ENCODE measurements at regions of chr6 and their contacts with region 1.

Region 1: GRCh38 chr6:111764238-111765175 is 108.7 kb downstream of the FYN start:
- DNase-seq: peak; percentile 94
- ATAC-seq: peak; percentile 83
- H3K4me3 ChIP-seq: peak overlapping the region; percentile 24; the same call in 1 of the 2 replicates
- H3K27ac ChIP-seq: peak overlapping the region; percentile 93
- H3K4me1 ChIP-seq: peaks cover 88% of the 10 kb centered on the region
- H3K27me3 ChIP-seq: no peaks in the 10 kb centered on the region
- CTCF ChIP-seq: no peak
- EP300 ChIP-seq: peak; percentile 74 to 89; a peak in 2 of 4 replicates
- POLR2A ChIP-seq: no peak; the same call in 1 of the 2 replicates
- RAD21 ChIP-seq: 0 out of 2 replicates have a peak, but pooled peaks have one; percentile 16

Region 2: GRCh38 chr6:111456208-111456607 is 308.3 kb before region 1 on chr6:
- CTCF ChIA-PET with region 1: no interaction called
- POLR2A ChIA-PET with region 1: no interaction called
- RAD21 ChIA-PET with region 1: no interaction called
- SMC1A ChIA-PET with region 1: no interaction called
- in situ Hi-C with region 1: no loop called
- intact Hi-C with region 1: no loop called
- DNase-seq: no peak
- ATAC-seq: no peak
- H3K4me3 ChIP-seq: no peak overlapping the region
- H3K27ac ChIP-seq: no peak overlapping the region
- H3K4me1 ChIP-seq: no peaks in the 10 kb centered on the region
- H3K27me3 ChIP-seq: no peaks in the 10 kb centered on the region
- CTCF ChIP-seq: no peak
- EP300 ChIP-seq: no peak
- POLR2A ChIP-seq: no peak
- RAD21 ChIP-seq: no peak

Region 3: GRCh38 chr6:111642463-111643158 is 121.9 kb before region 1 on chr6:
- CTCF ChIA-PET with region 1: no interaction called
- POLR2A ChIA-PET with region 1: no interaction called
- RAD21 ChIA-PET with region 1: no interaction called
- SMC1A ChIA-PET with region 1: no interaction called
- in situ Hi-C with region 1: no loop called
- intact Hi-C with region 1: no loop called
- DNase-seq: peak; percentile 21
- ATAC-seq: peak; percentile 95
- H3K4me3 ChIP-seq: no peak overlapping the region
- H3K27ac ChIP-seq: no peak overlapping the region
- H3K4me1 ChIP-seq: no peaks in the 10 kb centered on the region
- H3K27me3 ChIP-seq: no peaks in the 10 kb centered on the region
- CTCF ChIP-seq: peak; percentile 57 to 77 (median 65)
- EP300 ChIP-seq: no peak
- POLR2A ChIP-seq: no peak
- RAD21 ChIP-seq: peak; percentile 75

Region 4: GRCh38 chr6:111727802-111728201 is 36.7 kb before region 1 on chr6:
- CTCF ChIA-PET with region 1: interaction called, 13 read pairs
- POLR2A ChIA-PET with region 1: interaction called, 8 read pairs
- RAD21 ChIA-PET with region 1: interaction called, 75 read pairs
- SMC1A ChIA-PET with region 1: interaction called, 86 read pairs
- in situ Hi-C with region 1: no loop called
- intact Hi-C with region 1: loop called (anchors 1 kb)
- DNase-seq: no peak
- ATAC-seq: no peak
- H3K4me3 ChIP-seq: no peak overlapping the region
- H3K27ac ChIP-seq: no peak overlapping the region
- H3K4me1 ChIP-seq: peaks cover 48% of the 10 kb centered on the region
- H3K27me3 ChIP-seq: no peaks in the 10 kb centered on the region
- CTCF ChIP-seq: peak in 2 of 3 experiments; percentile 11 to 38; a peak in 1 of 6 replicates
- EP300 ChIP-seq: no peak
- POLR2A ChIP-seq: no peak
- RAD21 ChIP-seq: no peak

Region 5: DNA sequence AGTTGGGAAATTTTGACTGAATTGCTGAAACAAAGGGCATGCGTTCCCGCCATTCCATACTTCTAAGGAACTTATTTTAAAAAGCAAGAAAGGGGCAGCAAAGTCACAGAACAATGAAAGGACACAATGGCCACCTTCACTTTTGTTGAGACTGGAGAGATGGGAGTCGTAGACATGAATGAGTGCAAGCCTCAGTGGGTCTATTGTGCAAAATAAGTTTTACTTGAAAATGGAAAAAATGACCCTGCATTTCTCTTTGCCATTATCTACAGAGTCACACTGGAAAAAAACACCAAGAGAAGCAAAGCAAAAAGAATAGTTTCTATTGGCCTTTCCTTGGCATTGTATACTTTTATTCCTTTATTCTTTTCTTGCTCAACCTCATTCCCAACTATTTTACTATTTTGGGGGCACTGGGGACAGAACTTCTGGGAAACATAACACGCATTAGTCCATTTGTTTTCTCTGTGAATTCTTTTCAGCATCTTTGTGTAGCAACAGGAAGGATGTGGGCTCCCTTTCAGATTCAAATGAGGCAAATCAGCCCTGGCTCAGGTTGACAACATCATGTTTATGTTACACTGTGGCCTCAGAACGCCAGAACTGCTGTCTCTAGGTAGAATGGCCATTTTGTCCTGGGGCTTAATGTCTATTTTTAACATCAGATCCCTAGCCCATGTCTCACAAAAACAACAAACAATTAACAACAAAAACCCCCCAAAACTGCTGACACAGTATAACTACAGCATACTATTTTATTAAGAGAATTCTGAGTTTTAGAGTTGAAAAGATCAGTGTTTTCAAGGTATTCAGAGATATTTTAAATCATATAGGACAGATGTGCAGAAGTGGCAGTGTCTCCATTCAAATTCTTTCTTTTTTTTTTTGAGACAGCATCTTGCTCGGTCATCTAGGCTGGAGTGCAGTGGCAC is 13.5 kb before region 1 on chr6:
- CTCF ChIA-PET with region 1: interaction called, 62 read pairs
- POLR2A ChIA-PET with region 1: interaction called, 56 read pairs
- RAD21 ChIA-PET with region 1: interaction called, 158 read pairs
- SMC1A ChIA-PET with region 1: interaction called, 156 read pairs
- in situ Hi-C with region 1: no loop called
- intact Hi-C with region 1: loop called (anchors 1 kb)
- DNase-seq: no peak
- ATAC-seq: peak; percentile 83
- H3K4me3 ChIP-seq: no peak overlapping the region
- H3K27ac ChIP-seq: peak overlapping the region; percentile 85
- H3K4me1 ChIP-seq: peaks cover 69% of the 10 kb centered on the region
- H3K27me3 ChIP-seq: no peaks in the 10 kb centered on the region
- CTCF ChIP-seq: no peak
- EP300 ChIP-seq: peak; percentile 27 to 70; a peak in 2 of 4 replicates
- POLR2A ChIP-seq: no peak
- RAD21 ChIP-seq: peak; percentile 19; the same call in 1 of the 2 replicates

Region 6: GRCh38 chr6:111804627-111805235 is 40.2 kb after region 1 on chr6:
- CTCF ChIA-PET with region 1: interaction called, 22 read pairs
- POLR2A ChIA-PET with region 1: interaction called, 7 read pairs
- RAD21 ChIA-PET with region 1: interaction called, 56 read pairs
- SMC1A ChIA-PET with region 1: interaction called, 66 read pairs
- in situ Hi-C with region 1: no loop called
- intact Hi-C with region 1: loop called (anchors 1 kb)
- DNase-seq: peak; percentile 84
- ATAC-seq: peak; percentile 77
- H3K4me3 ChIP-seq: no peak overlapping the region
- H3K27ac ChIP-seq: peak overlapping the region; percentile 70
- H3K4me1 ChIP-seq: peaks cover 70% of the 10 kb centered on the region
- H3K27me3 ChIP-seq: no peaks in the 10 kb centered on the region
- CTCF ChIP-seq: peak in 2 of 3 experiments; percentile 24 to 35; a peak in 2 of 6 replicates
- EP300 ChIP-seq: peak; percentile 65 to 88; a peak in 2 of 4 replicates
- POLR2A ChIP-seq: no peak
- RAD21 ChIP-seq: peak; percentile 62

Region 7: DNA sequence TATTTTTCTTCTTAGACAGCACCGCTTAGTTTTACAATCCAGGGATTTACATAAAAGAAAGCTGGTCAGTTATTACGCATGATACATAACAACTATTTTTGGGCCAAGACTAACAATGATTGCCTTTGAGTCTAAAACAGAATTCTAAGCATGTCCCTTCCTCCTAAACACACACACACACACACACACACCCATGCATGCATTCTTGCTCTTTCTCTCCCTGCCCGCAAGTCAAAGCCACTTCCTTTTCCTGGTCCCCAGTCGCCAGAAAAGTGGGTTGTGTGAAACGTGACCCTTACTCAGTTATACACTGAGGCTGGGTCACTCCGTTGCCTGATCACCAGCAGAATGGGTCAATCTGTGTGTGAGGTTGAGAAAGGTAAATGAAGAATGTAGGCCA is 77.3 kb after region 1 on chr6:
- CTCF ChIA-PET with region 1: interaction called, 25 read pairs
- POLR2A ChIA-PET with region 1: interaction called, 19 read pairs
- RAD21 ChIA-PET with region 1: interaction called, 35 read pairs
- SMC1A ChIA-PET with region 1: interaction called, 55 read pairs
- in situ Hi-C with region 1: no loop called
- intact Hi-C with region 1: no loop called
- DNase-seq: peak; percentile 60
- ATAC-seq: no peak
- H3K4me3 ChIP-seq: no peak overlapping the region; the same call in 1 of the 2 replicates
- H3K27ac ChIP-seq: peak overlapping the region; percentile 72
- H3K4me1 ChIP-seq: peaks cover 82% of the 10 kb centered on the region
- H3K27me3 ChIP-seq: no peaks in the 10 kb centered on the region
- CTCF ChIP-seq: no peak
- EP300 ChIP-seq: peak; percentile 36 to 52; a peak in 2 of 4 replicates
- POLR2A ChIP-seq: no peak
- RAD21 ChIP-seq: no peak

Region 8: DNA sequence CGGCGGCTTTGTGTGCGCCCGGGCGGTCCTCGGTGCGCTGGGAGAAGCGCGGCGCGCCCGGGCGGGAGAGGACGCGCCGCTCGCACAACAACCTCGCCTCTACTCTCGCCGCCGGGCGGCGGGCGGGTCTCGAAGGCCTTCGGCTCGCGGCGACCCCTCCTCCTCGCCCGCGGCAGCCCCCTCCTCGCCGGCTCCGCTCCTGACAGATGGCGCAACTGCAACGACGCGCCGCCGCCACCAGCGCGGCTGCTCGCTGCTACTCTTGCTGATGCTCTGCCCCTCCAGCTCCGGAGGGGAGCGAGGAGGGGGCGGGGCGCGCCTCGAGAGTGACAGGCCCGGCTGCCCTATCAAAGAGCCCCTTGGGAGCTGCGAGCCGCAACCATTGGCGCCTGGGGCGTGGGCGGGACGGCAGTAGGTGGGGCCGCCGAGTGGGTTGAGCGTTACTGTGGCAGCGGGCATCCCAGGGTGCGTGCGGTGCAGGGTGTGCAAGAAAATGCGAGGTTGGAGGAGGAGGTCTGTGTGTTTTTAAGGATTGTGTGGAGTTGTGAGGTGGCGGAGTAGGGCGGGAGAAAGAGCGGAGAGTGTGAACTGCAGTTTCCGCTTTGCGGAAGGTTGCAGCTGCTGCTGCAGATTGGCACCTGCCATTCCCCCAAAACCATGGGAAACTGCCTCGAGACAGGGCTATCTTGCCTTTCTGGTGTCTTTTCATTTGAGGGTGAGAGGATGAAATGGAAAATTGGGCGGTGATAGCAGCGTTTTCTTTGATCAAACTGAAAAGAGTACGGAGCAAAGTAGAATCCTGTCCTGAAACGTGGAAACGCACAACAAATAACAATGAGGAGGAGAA is 108.9 kb after region 1 on chr6 and contains the start of gene FYN:
- CTCF ChIA-PET with region 1: interaction called, 18 read pairs
- POLR2A ChIA-PET with region 1: interaction called, 4 read pairs
- RAD21 ChIA-PET with region 1: interaction called, 14 read pairs
- SMC1A ChIA-PET with region 1: interaction called, 13 read pairs
- in situ Hi-C with region 1: no loop called
- intact Hi-C with region 1: loop called (anchors 1 kb)
- DNase-seq: peak; percentile 76
- ATAC-seq: peak; percentile 92
- H3K4me3 ChIP-seq: peak within 1 kb of the TSS; percentile 98
- H3K27ac ChIP-seq: peak within 1 kb of the TSS; percentile 76
- H3K4me1 ChIP-seq: peaks cover 5% of the 10 kb centered on the region
- H3K27me3 ChIP-seq: no peaks in the 10 kb centered on the region
- CTCF ChIP-seq: peak; percentile 28 to 65 (median 30); a peak in 5 of 6 replicates
- EP300 ChIP-seq: no peak
- POLR2A ChIP-seq: peak; percentile 95
- RAD21 ChIP-seq: peak; percentile 48
- polyA plus RNA-seq, gene FYN: 51.4 to 55.1 TPM